SK-N-SH (cell line): ENCODE measurements at regions of chr5 and their contacts with region 1.

Region 1: GRCh38 chr5:149852641-149853330 is 91.8 kb downstream of the PDE6A start:
- DNase-seq: peak; percentile 73
- H3K4me3 ChIP-seq: no peak overlapping the region; a peak in 1 of 4 replicates
- H3K27ac ChIP-seq: no peak overlapping the region
- H3K4me1 ChIP-seq: peaks cover 5 to 6% of the 10 kb centered on the region in 2 experiments; a peak in 2 of 4 replicates
- H3K27me3 ChIP-seq: no peaks in the 10 kb centered on the region
- CTCF ChIP-seq: peak; percentile 92
- EP300 ChIP-seq: no peak
- RAD21 ChIP-seq: peak; percentile 73

Region 2: GRCh38 chr5:149636851-149637246 is 215.9 kb before region 1 on chr5:
- CTCF ChIA-PET with region 1: interaction called, 21 read pairs
- POLR2A ChIA-PET with region 1: no interaction called
- DNase-seq: peak; percentile 81
- H3K4me3 ChIP-seq: peak overlapping the region in 1 of 2 experiments; percentile 43; a peak in 1 of 4 replicates
- H3K27ac ChIP-seq: no peak overlapping the region
- H3K4me1 ChIP-seq: peaks cover 0 to 12% of the 10 kb centered on the region in 2 experiments; a peak in 1 of 4 replicates
- H3K27me3 ChIP-seq: no peaks in the 10 kb centered on the region
- CTCF ChIP-seq: peak; percentile 84
- EP300 ChIP-seq: no peak
- RAD21 ChIP-seq: peak; percentile 99

Region 3: GRCh38 chr5:149828161-149828884 is 24.5 kb before region 1 on chr5:
- CTCF ChIA-PET with region 1: interaction called, 460 read pairs
- POLR2A ChIA-PET with region 1: no interaction called
- DNase-seq: peak; percentile 83
- H3K4me3 ChIP-seq: peak overlapping the region in 1 of 2 experiments; percentile 23; a peak in 1 of 4 replicates
- H3K27ac ChIP-seq: no peak overlapping the region
- H3K4me1 ChIP-seq: no peaks in the 10 kb centered on the region; a peak in 1 of 4 replicates
- H3K27me3 ChIP-seq: no peaks in the 10 kb centered on the region
- CTCF ChIP-seq: peak; percentile 91
- EP300 ChIP-seq: no peak
- RAD21 ChIP-seq: peak; percentile 95

Region 4: GRCh38 chr5:149913436-149914419 is 60.9 kb after region 1 on chr5:
- CTCF ChIA-PET with region 1: interaction called, 13 read pairs
- POLR2A ChIA-PET with region 1: no interaction called
- DNase-seq: no peak
- H3K4me3 ChIP-seq: no peak overlapping the region
- H3K27ac ChIP-seq: no peak overlapping the region
- H3K4me1 ChIP-seq: peaks cover 0 to 22% of the 10 kb centered on the region in 2 experiments; a peak in 1 of 4 replicates
- H3K27me3 ChIP-seq: no peaks in the 10 kb centered on the region
- CTCF ChIP-seq: no peak
- EP300 ChIP-seq: no peak
- RAD21 ChIP-seq: no peak

Region 5: DNA sequence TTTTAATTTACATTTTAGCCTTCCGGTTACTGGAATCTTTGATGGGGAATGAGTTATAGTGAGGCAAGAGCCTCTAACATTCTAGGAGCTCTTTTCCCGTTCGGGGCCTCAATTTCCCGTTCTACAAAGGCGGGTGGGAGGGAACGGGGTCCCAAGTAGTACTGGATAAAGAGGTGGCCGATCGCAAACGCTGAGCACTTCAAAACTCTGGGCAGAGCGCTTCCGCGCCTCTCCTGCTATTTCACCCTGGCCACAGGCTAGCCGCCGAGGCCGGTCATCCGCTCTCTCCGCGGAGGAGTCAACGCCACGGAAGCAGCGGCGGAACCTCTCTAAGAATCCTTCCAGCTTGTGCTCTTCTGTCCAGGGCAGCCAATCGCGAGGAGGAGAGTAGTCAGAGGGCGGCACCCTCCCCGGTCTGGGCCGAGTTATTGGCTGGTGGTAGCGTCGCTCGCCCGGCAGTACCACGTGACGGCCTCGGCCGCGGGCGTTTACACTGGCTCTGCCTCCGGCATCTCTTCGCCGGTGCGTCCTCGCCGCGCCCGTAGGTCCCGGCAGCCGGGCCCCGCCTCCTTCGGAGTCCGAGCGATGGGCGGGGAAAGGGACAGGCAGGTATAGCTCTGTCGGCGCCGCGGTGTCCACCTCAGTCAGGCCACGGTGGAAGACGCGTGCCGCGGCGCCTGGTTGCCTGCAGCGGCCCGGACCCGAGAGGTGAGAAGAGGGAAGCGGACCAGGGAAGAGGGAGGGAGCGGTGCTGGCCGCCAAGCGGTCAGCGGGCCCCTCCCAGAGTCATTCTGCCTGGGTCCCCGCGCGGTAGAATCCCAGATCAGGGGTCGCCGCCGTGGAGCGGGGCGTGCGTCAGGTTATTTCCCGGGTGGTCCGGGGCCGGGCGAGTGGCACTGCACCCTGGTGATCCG is 107.7 kb after region 1 on chr5 and contains the start of gene SLC26A2:
- CTCF ChIA-PET with region 1: interaction called, 53 read pairs
- POLR2A ChIA-PET with region 1: no interaction called
- DNase-seq: peak; percentile 96
- H3K4me3 ChIP-seq: peak within 1 kb of the TSS; percentile 73 to 77
- H3K27ac ChIP-seq: peak within 1 kb of the TSS; percentile 87 to 94
- H3K4me1 ChIP-seq: peaks cover 10 to 12% of the 10 kb centered on the region in 2 experiments; a peak in 3 of 4 replicates
- H3K27me3 ChIP-seq: no peaks in the 10 kb centered on the region
- CTCF ChIP-seq: no peak; the same call in 1 of the 2 replicates
- EP300 ChIP-seq: peak in 1 of 2 experiments; percentile 22; a peak in 1 of 4 replicates
- RAD21 ChIP-seq: no peak
- polyA plus RNA-seq, gene SLC26A2: 1.3 and 1.9 TPM in 2 replicates

Region 6: DNA sequence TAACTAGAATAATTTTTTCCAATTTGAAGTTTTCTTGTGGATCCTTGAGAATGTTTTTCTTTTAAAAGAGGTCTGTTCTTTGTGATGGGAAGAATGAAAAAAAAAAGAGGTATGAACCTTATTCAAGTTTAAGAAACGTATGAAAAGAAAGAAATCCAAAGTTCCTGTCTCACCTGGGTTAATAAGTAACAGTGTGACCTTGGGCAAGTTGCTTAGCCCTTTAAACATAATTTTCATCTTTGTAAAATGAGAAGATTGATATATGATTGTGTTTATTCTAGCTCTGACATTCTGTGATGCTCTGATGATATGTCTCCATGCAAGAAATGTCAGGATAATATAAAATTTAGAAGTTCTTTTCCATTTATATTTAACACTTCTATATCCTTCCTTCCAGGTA is 127.1 kb after region 1 on chr5:
- CTCF ChIA-PET with region 1: interaction called, 12 read pairs
- POLR2A ChIA-PET with region 1: no interaction called
- DNase-seq: no peak
- H3K4me3 ChIP-seq: no peak overlapping the region
- H3K27ac ChIP-seq: no peak overlapping the region
- H3K4me1 ChIP-seq: no peaks in the 10 kb centered on the region
- H3K27me3 ChIP-seq: no peaks in the 10 kb centered on the region
- CTCF ChIP-seq: no peak
- EP300 ChIP-seq: no peak
- RAD21 ChIP-seq: no peak